ENCODE measurements at regions of chr13 and their contacts with region 1.

Region 1: GRCh38 chr13:20505405-20506366 is 20.0 kb downstream of the CRYL1 start:
- DNase-seq: no peak
- ATAC-seq: no peak
- H3K4me3 ChIP-seq: no peak overlapping the region
- H3K27ac ChIP-seq: no peak overlapping the region
- H3K4me1 ChIP-seq: peaks cover 4% of the 10 kb centered on the region
- H3K27me3 ChIP-seq: no peaks in the 10 kb centered on the region

Region 2: GRCh38 chr13:20425819-20426219 is 79.9 kb before region 1 on chr13:
- intact Hi-C with region 1: no loop called
- DNase-seq: no peak
- ATAC-seq: no peak
- H3K4me3 ChIP-seq: no peak overlapping the region
- H3K27ac ChIP-seq: no peak overlapping the region
- H3K4me1 ChIP-seq: peaks cover 2% of the 10 kb centered on the region
- H3K27me3 ChIP-seq: no peaks in the 10 kb centered on the region

Region 3: DNA sequence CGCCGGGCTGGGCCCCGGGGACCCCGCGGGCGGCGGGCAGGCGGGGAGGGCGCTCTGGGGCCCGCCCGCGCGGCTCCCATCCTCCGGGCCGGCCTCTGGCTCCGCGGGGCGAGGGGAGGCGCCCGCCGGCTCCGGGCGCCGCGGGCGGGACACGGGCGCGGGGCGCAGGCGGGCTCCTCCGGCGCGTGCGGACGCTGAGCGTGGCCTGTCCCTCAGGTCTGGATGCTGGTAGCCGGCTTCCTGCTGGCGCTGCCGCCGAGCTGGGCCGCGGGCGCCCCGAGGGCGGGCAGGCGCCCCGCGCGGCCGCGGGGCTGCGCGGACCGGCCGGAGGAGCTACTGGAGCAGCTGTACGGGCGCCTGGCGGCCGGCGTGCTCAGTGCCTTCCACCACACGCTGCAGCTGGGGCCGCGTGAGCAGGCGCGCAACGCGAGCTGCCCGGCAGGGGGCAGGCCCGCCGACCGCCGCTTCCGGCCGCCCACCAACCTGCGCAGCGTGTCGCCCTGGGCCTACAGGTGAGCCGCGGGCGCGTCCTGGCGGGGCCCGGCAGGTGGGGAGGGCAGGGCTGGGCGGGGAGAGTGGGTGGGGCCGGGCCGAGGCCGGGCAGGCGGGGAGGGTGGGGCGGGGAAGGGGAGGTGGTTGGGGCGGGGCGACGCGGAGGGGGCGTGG is 198.2 kb after region 1 on chr13:
- intact Hi-C with region 1: loop called in 1 of 4 experiments (anchors 10 kb)
- DNase-seq: peak; percentile 79 to 92 (median 89)
- ATAC-seq: peak; percentile 85 to 91
- H3K4me3 ChIP-seq: peak overlapping the region; percentile 97
- H3K27ac ChIP-seq: peak overlapping the region; percentile 39
- H3K4me1 ChIP-seq: no peaks in the 10 kb centered on the region
- H3K27me3 ChIP-seq: no peaks in the 10 kb centered on the region